ENCODE measurements at regions of chr13 and their contacts with region 1.

Region 1: DNA sequence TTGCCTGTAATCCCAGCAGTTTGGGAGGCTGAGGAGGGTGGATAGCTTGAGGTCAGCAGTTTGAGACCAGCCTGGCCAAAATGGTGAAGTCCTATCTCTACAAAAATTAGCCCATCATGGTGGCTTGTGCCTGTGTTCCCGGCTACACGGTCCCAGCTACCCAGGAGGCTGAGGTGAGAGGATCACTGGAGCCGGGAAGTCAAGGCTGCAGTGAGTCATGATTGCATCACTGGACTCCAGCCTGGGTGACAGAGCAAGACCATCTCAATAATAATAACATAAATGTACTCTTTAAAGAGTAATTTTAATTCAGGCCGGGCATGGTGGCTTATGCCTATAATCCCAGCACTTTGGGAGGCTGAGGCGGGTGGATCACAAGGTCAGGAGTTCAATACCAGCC is 38.7 kb downstream of the SKA3 start:
- DNase-seq: peak; percentile 60
- ATAC-seq: no peak
- H3K4me3 ChIP-seq: no peak overlapping the region
- H3K27ac ChIP-seq: no peak overlapping the region
- H3K4me1 ChIP-seq: peaks cover 24% of the 10 kb centered on the region
- H3K27me3 ChIP-seq: no peaks in the 10 kb centered on the region
- CTCF ChIP-seq: no peak

Region 2: DNA sequence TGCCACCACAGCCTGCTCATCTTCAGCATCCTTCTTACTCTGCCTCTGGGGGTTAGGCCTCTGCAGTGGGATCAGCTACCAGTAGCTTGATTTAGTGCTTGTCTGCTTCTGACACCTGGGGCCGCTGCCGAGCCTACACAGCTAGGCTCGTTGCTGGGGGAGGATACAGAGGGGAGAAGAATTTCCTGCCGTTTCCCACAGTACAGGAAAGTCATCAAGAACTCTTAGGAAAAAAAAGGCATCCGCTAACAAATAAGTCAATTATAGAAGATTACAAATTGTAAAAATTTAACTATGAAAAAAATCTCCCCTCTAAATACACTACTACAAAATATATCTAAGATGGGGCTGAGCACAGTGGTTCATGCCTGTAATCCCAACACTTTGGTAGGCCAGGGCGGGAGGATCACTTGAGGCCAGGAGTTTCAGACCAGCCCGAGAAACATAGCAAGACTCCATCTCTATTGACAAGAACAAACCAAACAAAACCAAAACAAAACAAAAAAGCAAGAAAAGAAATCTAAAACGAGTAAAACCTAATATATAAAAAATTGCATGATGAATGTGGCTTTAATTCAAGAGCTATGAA is 103.0 kb before region 1 on chr13:
- CTCF ChIA-PET with region 1: interaction called, 7 read pairs
- POLR2A ChIA-PET with region 1: interaction called, 4 read pairs
- intact Hi-C with region 1: loop called (anchors 5 kb)
- DNase-seq: peak; percentile 36
- ATAC-seq: peak; percentile 17
- H3K4me3 ChIP-seq: 0 out of 2 replicates have a peak overlapping the region, but pooled peaks have one; percentile 13
- H3K27ac ChIP-seq: peak overlapping the region; percentile 99
- H3K4me1 ChIP-seq: peaks cover 31% of the 10 kb centered on the region
- H3K27me3 ChIP-seq: no peaks in the 10 kb centered on the region
- CTCF ChIP-seq: peak; percentile 52

Region 3: GRCh38 chr13:21060987-21061763 is 76.5 kb before region 1 on chr13 and contains the start of gene LATS2:
- CTCF ChIA-PET with region 1: no interaction called
- POLR2A ChIA-PET with region 1: no interaction called
- intact Hi-C with region 1: loop called (anchors 10 kb)
- DNase-seq: peak; percentile 94
- ATAC-seq: peak; percentile 83
- H3K4me3 ChIP-seq: peak within 1 kb of the TSS; percentile 96
- H3K27ac ChIP-seq: peak within 1 kb of the TSS; percentile 75
- H3K4me1 ChIP-seq: peaks cover 18% of the 10 kb centered on the region
- H3K27me3 ChIP-seq: no peaks in the 10 kb centered on the region
- CTCF ChIP-seq: no peak
- total RNA-seq, gene LATS2: 11.0 and 11.1 TPM in 2 replicates

Measured in PC-3 (cell line).